Naive thymus-derived CD4-positive, alpha-beta T cell (primary cell): ENCODE measurements at regions of chr12 and their contacts with region 1.

Region 1: GRCh38 chr12:62379026-62379722 is 87.5 kb upstream of the MON2 start:
- DNase-seq: no peak
- ATAC-seq: no peak
- H3K4me3 ChIP-seq: no peak overlapping the region
- H3K4me3 Mint-ChIP-seq: peak overlapping the region in 2 of 10 donors; percentile 1 to 6
- H3K27ac ChIP-seq: no peak overlapping the region
- H3K27ac Mint-ChIP-seq: peak overlapping the region in 8 of 9 donors; percentile 13 to 83 (median 64)
- H3K4me1 ChIP-seq: no peaks in the 10 kb centered on the region
- H3K4me1 Mint-ChIP-seq: peaks cover 13 to 45% (median 30%) of the 10 kb centered on the region in 7 donors
- H3K27me3 ChIP-seq: no peaks in the 10 kb centered on the region
- H3K27me3 Mint-ChIP-seq: no peaks in the 10 kb centered on the region

Region 2: GRCh38 chr12:62306569-62307530 is 72.3 kb before region 1 on chr12:
- CTCF ChIA-PET with region 1: no interaction called
- POLR2A ChIA-PET with region 1: no interaction called
- intact Hi-C with region 1: no loop called
- DNase-seq: no peak
- ATAC-seq: no peak
- H3K4me3 ChIP-seq: no peak overlapping the region
- H3K4me3 Mint-ChIP-seq: peak overlapping the region in 2 of 10 donors; percentile 20 to 25
- H3K27ac ChIP-seq: no peak overlapping the region
- H3K27ac Mint-ChIP-seq: peak overlapping the region in 1 of 9 donors; percentile 18
- H3K4me1 ChIP-seq: peaks cover 0 to 12% of the 10 kb centered on the region in 2 donors
- H3K4me1 Mint-ChIP-seq: peaks cover 22 to 81% (median 74%) of the 10 kb centered on the region in 7 donors
- H3K27me3 ChIP-seq: no peaks in the 10 kb centered on the region
- H3K27me3 Mint-ChIP-seq: no peaks in the 10 kb centered on the region

Region 3: DNA sequence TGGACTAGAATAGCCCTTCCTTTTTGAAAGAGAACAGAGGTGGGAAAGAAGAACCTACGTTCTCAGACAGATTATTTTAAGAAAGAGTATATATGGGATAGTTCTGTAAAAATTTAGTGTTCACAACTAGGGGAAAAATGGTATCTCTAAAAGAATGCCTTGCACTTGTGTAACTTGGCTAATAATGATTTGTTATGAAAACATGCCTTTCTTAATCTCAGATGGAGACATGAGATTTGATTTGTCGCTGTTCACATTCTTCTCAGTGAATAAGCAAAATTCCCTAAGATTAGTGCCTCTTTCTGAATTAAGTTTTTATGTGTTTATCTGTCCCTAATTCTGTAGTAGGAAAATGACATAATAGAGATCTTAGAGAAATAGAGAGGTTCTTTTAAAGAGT is 18.1 kb before region 1 on chr12:
- CTCF ChIA-PET with region 1: no interaction called
- POLR2A ChIA-PET with region 1: no interaction called
- intact Hi-C with region 1: loop called in 1 of 2 experiments (anchors 2 kb)
- DNase-seq: no peak
- ATAC-seq: no peak
- H3K4me3 ChIP-seq: no peak overlapping the region
- H3K4me3 Mint-ChIP-seq: no peak overlapping the region
- H3K27ac ChIP-seq: no peak overlapping the region
- H3K27ac Mint-ChIP-seq: peak overlapping the region in 2 of 9 donors; percentile 16 to 46
- H3K4me1 ChIP-seq: no peaks in the 10 kb centered on the region
- H3K4me1 Mint-ChIP-seq: peaks cover 13 to 62% (median 38%) of the 10 kb centered on the region in 7 donors
- H3K27me3 ChIP-seq: no peaks in the 10 kb centered on the region
- H3K27me3 Mint-ChIP-seq: no peaks in the 10 kb centered on the region

Region 4: DNA sequence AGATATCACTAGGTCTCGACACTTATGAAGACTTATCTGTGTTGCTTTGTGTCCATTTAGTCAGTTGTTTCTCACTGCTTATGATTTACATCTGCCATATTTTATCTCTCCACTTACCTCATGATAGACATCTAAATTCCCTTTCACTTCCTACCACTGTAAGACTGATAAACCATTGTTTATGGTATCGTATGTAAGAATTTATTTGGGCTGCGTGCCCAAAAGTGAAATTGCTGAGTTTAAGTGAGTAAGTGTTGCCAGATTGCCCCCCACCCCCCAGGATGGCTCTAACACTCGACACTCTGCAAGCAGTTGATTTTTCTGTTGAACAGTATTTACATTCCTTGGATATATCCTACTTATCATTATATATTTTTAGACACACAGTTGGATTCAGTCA is 17.6 kb after region 1 on chr12:
- CTCF ChIA-PET with region 1: interaction called, 3 read pairs
- POLR2A ChIA-PET with region 1: no interaction called
- intact Hi-C with region 1: loop called in 1 of 2 experiments (anchors 2 kb)
- DNase-seq: no peak
- ATAC-seq: no peak
- H3K4me3 ChIP-seq: no peak overlapping the region
- H3K4me3 Mint-ChIP-seq: no peak overlapping the region
- H3K27ac ChIP-seq: no peak overlapping the region
- H3K27ac Mint-ChIP-seq: peak overlapping the region in 1 of 9 donors; percentile 49
- H3K4me1 ChIP-seq: no peaks in the 10 kb centered on the region
- H3K4me1 Mint-ChIP-seq: peaks cover 5 to 10% (median 7%) of the 10 kb centered on the region in 7 donors
- H3K27me3 ChIP-seq: no peaks in the 10 kb centered on the region
- H3K27me3 Mint-ChIP-seq: no peaks in the 10 kb centered on the region

Region 5: DNA sequence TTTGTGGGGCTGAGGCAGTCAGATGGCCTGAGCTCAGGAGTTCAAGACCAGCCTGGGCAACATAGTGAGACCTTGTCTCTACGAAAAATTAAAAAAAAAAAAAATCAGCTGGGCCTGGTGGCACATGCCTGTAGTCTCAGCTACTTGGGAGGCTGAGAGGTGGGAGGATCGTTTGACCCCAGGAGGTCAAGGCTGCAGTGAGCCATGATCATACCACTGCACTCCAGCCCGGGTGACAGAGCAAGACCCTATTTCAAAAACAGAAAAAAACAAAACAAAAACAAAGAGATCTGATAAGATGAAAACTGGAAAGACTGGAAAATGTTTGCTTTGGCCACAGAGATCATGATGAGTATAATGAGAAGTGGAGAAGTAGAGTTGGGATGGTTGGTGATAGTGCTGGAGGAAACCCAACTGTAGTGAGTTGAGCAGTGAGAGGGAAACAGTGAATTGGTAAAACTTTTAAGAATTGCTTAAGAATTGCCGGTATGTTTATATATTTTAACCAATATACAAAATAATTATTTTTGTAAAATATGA is 126.5 kb after region 1 on chr12:
- CTCF ChIA-PET with region 1: no interaction called
- POLR2A ChIA-PET with region 1: no interaction called
- intact Hi-C with region 1: no loop called
- DNase-seq: no peak
- ATAC-seq: no peak
- H3K4me3 ChIP-seq: no peak overlapping the region
- H3K4me3 Mint-ChIP-seq: no peak overlapping the region
- H3K27ac ChIP-seq: no peak overlapping the region
- H3K27ac Mint-ChIP-seq: no peak overlapping the region
- H3K4me1 ChIP-seq: no peaks in the 10 kb centered on the region
- H3K4me1 Mint-ChIP-seq: peaks cover 0 to 7% (median 3%) of the 10 kb centered on the region in 7 donors
- H3K27me3 ChIP-seq: no peaks in the 10 kb centered on the region
- H3K27me3 Mint-ChIP-seq: no peaks in the 10 kb centered on the region